ENCODE measurements at regions of chr3 and their contacts with region 1.

Region 1: DNA sequence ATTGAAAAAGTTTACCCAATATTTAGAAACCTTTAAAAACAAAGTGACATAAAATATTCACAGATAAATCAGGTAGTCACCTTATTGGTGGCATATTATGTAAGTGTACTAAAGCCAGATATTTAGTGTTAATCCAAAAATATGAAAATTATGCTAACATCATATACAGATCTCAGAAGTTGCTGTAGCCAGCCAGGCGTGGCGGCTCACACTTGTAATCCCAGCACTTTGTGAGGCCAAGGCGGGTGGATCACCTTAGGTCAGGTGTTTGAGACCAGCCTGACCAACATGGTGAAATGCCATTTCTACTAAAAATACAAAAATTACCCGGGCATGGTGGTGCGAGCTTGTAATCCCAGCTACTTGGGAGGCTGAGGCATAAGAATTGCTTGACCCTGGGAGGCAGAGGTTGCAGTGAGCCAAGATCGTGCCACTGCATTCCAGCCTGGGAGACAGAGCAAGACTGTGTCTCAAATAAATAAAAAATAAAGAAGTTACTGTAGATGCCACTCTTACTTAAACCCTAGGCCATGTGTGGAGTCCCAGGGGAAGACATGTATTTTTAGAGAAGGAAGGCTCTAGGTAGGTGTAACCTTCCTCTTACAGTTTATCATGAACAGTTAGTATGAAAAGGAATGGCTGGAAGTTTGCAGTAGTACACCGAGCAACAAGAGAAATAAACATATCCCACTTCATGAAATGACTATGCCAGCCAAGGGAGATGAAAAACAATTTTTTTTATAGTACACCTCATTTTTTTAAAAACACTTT is 9.6 kb downstream of the SETD5 start:
- DNase-seq: no peak
- ATAC-seq: no peak
- H3K4me3 ChIP-seq: no peak overlapping the region
- H3K4me3 Mint-ChIP-seq: no peak overlapping the region
- H3K27ac ChIP-seq: no peak overlapping the region
- H3K27ac Mint-ChIP-seq: peak overlapping the region in 1 of 2 donors; percentile 34
- H3K4me1 ChIP-seq: peaks cover 14 to 35% of the 10 kb centered on the region in 2 experiments
- H3K4me1 Mint-ChIP-seq: peaks cover 81 to 87% (median 84%) of the 10 kb centered on the region in 3 donors
- H3K27me3 ChIP-seq: no peaks in the 10 kb centered on the region
- H3K27me3 Mint-ChIP-seq: no peaks in the 10 kb centered on the region

Region 2: DNA sequence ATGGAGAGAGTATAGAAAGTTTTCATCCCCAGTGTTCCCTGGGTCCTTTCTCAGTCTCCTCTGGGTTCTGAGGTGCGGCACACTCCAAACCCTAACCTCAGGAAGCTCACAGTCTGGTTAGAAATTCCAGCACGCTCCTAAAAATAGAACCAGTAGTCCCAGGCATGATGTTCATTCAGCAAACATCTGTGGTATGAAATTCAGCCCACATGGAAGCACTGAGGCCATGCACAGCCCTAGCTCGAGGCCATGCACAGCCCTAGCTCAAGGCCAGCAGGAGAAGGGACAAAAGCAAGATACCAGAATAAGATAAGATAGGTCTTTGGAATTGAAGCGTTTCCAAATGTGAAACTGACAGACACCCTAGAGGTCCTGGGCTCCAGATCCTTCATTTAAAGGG is 555.3 kb before region 1 on chr3:
- CTCF ChIA-PET with region 1: no interaction called
- POLR2A ChIA-PET with region 1: no interaction called
- DNase-seq: no peak
- ATAC-seq: no peak
- H3K4me3 ChIP-seq: no peak overlapping the region
- H3K4me3 Mint-ChIP-seq: no peak overlapping the region
- H3K27ac ChIP-seq: no peak overlapping the region
- H3K27ac Mint-ChIP-seq: no peak overlapping the region
- H3K4me1 ChIP-seq: no peaks in the 10 kb centered on the region
- H3K4me1 Mint-ChIP-seq: no peaks in the 10 kb centered on the region
- H3K27me3 ChIP-seq: peaks cover 0 to 3% of the 10 kb centered on the region in 2 experiments
- H3K27me3 Mint-ChIP-seq: no peaks in the 10 kb centered on the region

Region 3: DNA sequence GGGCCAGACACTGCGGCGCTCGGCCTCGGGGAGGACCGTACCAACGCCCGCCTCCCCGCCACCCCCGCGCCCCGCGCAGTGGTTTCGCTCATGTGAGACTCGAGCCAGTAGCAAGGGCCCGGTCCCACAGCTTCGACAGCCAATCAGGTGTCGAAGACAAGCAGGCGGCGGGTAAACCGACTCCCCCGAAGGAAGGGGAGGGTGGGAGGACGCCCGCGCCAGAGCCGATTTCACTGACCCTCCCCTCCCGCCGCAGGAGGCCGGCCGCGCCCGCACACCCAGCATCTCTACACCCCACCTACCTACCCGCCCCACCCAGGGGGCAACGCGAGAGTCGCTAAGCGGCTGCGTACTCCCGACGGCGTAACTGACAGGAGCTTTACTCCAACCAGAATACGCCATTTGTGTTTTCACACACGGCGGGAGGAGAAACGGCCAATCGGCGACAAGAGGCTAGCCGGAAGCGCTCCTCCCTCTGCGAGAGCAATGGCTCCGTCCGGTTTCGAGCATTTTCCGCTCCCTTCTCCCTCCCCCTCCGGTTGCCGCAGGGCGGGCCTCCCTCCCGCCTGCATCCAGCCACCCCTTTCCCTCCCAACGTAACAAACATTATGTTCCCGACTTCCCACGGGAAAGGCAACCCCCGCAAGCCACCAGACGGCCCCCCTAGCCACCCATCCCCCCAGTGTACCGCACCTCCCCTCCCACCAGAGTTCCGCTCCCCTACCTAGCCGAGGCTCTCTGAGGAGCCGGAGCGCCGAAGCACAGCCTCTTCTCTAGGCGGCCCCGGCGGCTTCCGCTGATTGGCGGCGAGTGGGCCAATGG is 10.1 kb before region 1 on chr3:
- CTCF ChIA-PET with region 1: interaction called, 5 to 8 read pairs
- POLR2A ChIA-PET with region 1: interaction called, 6 to 10 read pairs
- DNase-seq: peak; percentile 97 to 100 (median 99)
- ATAC-seq: peak; percentile 70 to 75 (median 71)
- H3K4me3 ChIP-seq: peak overlapping the region; percentile 80
- H3K4me3 Mint-ChIP-seq: peak overlapping the region; percentile 93 to 100 (median 95)
- H3K27ac ChIP-seq: peak overlapping the region; percentile 95
- H3K27ac Mint-ChIP-seq: peak overlapping the region; percentile 97 to 98
- H3K4me1 ChIP-seq: peaks cover 48 to 53% of the 10 kb centered on the region in 2 experiments
- H3K4me1 Mint-ChIP-seq: peaks cover 73 to 79% (median 75%) of the 10 kb centered on the region in 3 donors
- H3K27me3 ChIP-seq: no peaks in the 10 kb centered on the region
- H3K27me3 Mint-ChIP-seq: no peaks in the 10 kb centered on the region

Measured in T-cell (primary cell).